Activated CD4-positive, alpha-beta T cell treated with anti-CD3 and anti-CD28 coated beads, Interleukin-2, amount 10 ng/mL, durations not matched to agents 24 days and 14 days (primary cell): ENCODE measurements at regions of chr4 and their contacts with region 1.

Region 1: GRCh38 chr4:56435306-56435926 is at the start of gene PPAT:
- DNase-seq: peak; percentile 100
- H3K4me3 Mint-ChIP-seq: peak within 1 kb of the TSS; percentile 89
- H3K27ac Mint-ChIP-seq: peak within 1 kb of the TSS; percentile 95
- H3K4me1 Mint-ChIP-seq: peaks cover 41% of the 10 kb centered on the region
- H3K27me3 Mint-ChIP-seq: no peaks in the 10 kb centered on the region
- total RNA-seq, gene PPAT: 60.8 and 63.6 TPM in 2 replicates

Region 2: DNA sequence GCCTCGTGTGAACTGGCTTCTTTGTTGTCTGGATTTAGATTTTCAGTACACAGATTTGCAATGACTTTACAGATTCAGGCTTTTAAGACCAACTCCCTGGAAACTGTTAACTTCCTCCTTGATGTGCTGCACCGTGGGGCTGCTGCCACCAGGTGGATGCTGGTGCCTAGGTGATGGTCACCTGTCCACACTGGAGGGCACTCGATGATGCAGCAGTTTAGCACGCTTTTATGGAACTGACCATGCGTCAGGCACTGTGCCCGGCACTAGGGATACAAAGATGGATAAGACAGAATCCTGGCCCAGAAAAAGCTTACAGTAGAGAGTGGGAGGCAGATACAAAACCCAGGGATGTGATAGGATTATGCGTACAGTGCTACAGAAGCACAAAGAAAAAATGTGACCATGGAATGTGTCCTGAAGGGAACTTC is 306.0 kb before region 1 on chr4:
- intact Hi-C with region 1: no loop called
- DNase-seq: peak; percentile 61
- H3K4me3 Mint-ChIP-seq: no peak overlapping the region
- H3K27ac Mint-ChIP-seq: no peak overlapping the region
- H3K4me1 Mint-ChIP-seq: no peaks in the 10 kb centered on the region
- H3K27me3 Mint-ChIP-seq: peaks cover 11% of the 10 kb centered on the region

Region 3: DNA sequence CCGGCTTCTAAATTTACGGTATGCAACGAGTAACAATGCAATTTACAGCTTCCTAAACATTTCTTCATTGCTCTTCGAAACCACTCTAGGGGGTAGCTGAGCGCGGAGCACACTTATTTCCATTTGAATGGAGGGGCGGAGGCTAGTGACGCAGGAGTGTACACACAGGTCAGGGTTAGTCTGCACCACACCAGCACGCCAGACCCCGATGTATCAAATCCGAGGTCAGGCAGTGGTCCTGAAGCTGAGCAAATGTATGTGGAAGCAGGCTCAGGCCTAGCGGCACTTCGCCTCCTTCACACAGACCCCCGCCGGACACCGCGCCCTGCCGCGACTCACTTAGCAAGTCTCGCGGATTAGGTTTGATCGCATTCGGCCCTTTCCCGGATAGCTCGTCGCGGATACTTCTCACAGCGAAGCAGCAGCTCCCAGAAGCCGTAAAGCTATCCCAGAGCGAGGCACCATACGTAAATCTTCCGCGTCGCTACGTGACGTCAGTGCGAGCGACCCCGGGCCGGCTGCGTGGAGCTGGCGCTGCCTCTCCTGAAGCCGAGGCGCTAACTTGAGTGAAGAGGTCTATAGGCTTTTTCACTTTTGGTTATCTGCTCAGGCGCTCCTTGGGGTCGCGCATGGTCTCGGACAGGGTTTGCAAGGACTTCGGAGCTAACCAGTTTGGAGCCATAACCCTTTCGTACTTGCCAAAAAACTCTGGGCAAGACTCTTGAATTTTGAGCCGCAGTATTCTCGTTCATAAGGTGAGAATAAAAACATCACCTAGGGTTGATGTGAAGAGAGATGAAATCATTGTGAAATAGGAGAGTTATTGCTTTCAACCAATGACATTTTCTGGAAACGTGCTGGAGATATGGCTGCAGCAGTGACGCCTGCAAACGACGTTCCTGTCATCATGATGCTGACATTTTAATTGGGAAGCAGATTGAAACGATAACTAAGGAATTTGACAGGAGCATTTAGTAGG is 48.1 kb before region 1 on chr4 and contains the start of gene AASDH:
- intact Hi-C with region 1: loop called (anchors 1 kb)
- DNase-seq: peak; percentile 99
- H3K4me3 Mint-ChIP-seq: peak within 1 kb of the TSS; percentile 88
- H3K27ac Mint-ChIP-seq: peak within 1 kb of the TSS; percentile 96
- H3K4me1 Mint-ChIP-seq: peaks cover 29% of the 10 kb centered on the region
- H3K27me3 Mint-ChIP-seq: no peaks in the 10 kb centered on the region
- total RNA-seq, gene AASDH: 10.5 and 11.8 TPM in 2 replicates

Region 4: GRCh38 chr4:56424697-56425514 is 10.5 kb before region 1 on chr4:
- intact Hi-C with region 1: loop called (anchors 1 kb)
- DNase-seq: peak; percentile 81
- H3K4me3 Mint-ChIP-seq: no peak overlapping the region
- H3K27ac Mint-ChIP-seq: no peak overlapping the region
- H3K4me1 Mint-ChIP-seq: peaks cover 12% of the 10 kb centered on the region
- H3K27me3 Mint-ChIP-seq: no peaks in the 10 kb centered on the region

Region 5: GRCh38 chr4:56467284-56468096 is 32.1 kb after region 1 on chr4 and contains the start of gene SRP72:
- intact Hi-C with region 1: loop called (anchors 1 kb)
- DNase-seq: peak; percentile 97
- H3K4me3 Mint-ChIP-seq: peak within 1 kb of the TSS; percentile 94
- H3K27ac Mint-ChIP-seq: peak within 1 kb of the TSS; percentile 95
- H3K4me1 Mint-ChIP-seq: peaks cover 45% of the 10 kb centered on the region
- H3K27me3 Mint-ChIP-seq: no peaks in the 10 kb centered on the region
- total RNA-seq, gene SRP72: 202 and 209 TPM in 2 replicates

Region 6: DNA sequence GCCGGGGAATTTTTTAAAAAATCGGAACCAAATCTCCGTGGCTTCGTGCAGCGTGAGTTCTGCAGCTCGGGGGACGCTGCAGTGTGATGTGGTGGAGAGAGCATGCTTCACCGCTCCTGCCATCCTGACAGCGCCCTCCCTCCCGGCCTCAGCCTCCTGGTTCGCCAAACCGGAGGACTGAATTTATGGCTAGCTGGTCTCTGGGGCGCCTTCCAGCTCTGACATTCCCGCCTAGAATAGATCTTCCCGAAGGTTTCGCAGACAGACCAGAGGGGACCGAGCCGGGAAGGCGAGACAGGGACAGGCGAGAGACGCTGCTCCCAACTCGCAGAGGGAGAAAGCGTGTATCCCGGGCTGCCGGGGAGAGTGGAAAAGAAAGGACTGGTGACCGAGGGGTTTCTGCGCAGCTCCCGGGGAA is 219.8 kb after region 1 on chr4:
- intact Hi-C with region 1: loop called (anchors 2 kb)
- DNase-seq: peak; percentile 64
- H3K4me3 Mint-ChIP-seq: peak overlapping the region; percentile 95
- H3K27ac Mint-ChIP-seq: peak overlapping the region; percentile 88
- H3K4me1 Mint-ChIP-seq: peaks cover 59% of the 10 kb centered on the region
- H3K27me3 Mint-ChIP-seq: peaks cover 29% of the 10 kb centered on the region

Region 7: GRCh38 chr4:56907489-56908205 is 472.2 kb after region 1 on chr4 and contains the start of gene REST:
- intact Hi-C with region 1: loop called (anchors 1 kb)
- DNase-seq: peak; percentile 96
- H3K4me3 Mint-ChIP-seq: peak within 1 kb of the TSS; percentile 92
- H3K27ac Mint-ChIP-seq: peak within 1 kb of the TSS; percentile 87
- H3K4me1 Mint-ChIP-seq: peaks cover 35% of the 10 kb centered on the region
- H3K27me3 Mint-ChIP-seq: peaks cover 9% of the 10 kb centered on the region
- total RNA-seq, gene REST: 53.4 and 56.0 TPM in 2 replicates